ENCODE measurements at regions of chr4 and their contacts with region 1.

Region 1: GRCh38 chr4:145808021-145808650 is 128.2 kb downstream of the C4orf51 start:
- DNase-seq: peak; percentile 77 to 96
- H3K4me3 ChIP-seq: peak overlapping the region; percentile 35; the same call in 1 of the 2 replicates
- H3K27ac ChIP-seq: peak overlapping the region; percentile 99
- H3K4me1 ChIP-seq: peaks cover 26% of the 10 kb centered on the region
- H3K27me3 ChIP-seq: no peaks in the 10 kb centered on the region
- CTCF ChIP-seq: no peak

Region 2: DNA sequence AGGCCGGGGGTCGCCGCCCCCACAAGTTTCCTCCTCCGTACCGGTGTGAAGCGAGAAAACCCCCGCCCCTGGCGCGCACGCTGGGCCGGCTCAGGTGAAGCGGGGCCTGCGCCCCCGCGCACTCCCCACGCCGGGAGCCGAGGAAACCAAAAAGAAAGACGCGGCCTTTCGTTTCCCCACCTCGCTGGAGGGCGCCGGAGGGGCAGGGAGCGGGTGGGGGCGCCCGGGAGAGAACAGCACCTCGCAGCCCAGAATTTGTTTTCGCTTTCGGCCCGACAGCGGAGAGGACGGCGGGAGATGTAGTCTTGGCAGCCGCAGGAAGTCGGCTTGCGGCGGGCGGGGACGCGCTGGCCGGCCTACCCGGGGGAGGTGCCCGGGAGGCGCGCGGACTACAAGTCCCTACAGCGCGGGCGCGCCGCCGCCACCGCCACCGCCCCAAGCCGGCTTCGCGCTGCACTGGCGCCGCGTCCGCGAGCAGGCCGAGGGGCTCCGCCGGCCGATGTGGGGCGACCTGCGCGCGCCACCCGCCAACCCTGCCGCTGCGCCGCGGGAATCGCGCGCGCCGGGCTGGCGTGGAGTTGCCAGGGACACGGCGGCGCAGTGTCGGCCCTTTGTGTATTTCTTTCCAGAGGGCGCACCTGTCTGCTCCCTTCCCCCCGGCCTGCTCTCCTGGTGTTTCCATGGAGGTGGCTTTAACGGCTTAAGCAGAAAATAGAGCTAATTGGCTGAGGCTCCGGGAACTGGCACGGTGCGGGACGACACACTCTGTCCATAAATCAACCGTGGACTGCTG is 627.6 kb before region 1 on chr4 and contains the start of gene OTUD4:
- CTCF ChIA-PET with region 1: no interaction called
- POLR2A ChIA-PET with region 1: interaction called, 4 read pairs
- intact Hi-C with region 1: loop called (anchors 10 kb)
- DNase-seq: peak; percentile 71 to 94
- H3K4me3 ChIP-seq: peak within 1 kb of the TSS; percentile 95
- H3K27ac ChIP-seq: peak within 1 kb of the TSS; percentile 79
- H3K4me1 ChIP-seq: peaks cover 14% of the 10 kb centered on the region
- H3K27me3 ChIP-seq: no peaks in the 10 kb centered on the region
- CTCF ChIP-seq: no peak
- total RNA-seq, gene OTUD4: 43.5 and 44.2 TPM in 2 replicates

Region 3: GRCh38 chr4:145679520-145679919 is 128.6 kb before region 1 on chr4:
- CTCF ChIA-PET with region 1: no interaction called
- POLR2A ChIA-PET with region 1: no interaction called
- intact Hi-C with region 1: loop called (anchors 2 kb)
- DNase-seq: peak; percentile 51 to 77
- H3K4me3 ChIP-seq: no peak overlapping the region
- H3K27ac ChIP-seq: peak overlapping the region; percentile 60
- H3K4me1 ChIP-seq: peaks cover 20% of the 10 kb centered on the region
- H3K27me3 ChIP-seq: no peaks in the 10 kb centered on the region
- CTCF ChIP-seq: no peak

Region 4: DNA sequence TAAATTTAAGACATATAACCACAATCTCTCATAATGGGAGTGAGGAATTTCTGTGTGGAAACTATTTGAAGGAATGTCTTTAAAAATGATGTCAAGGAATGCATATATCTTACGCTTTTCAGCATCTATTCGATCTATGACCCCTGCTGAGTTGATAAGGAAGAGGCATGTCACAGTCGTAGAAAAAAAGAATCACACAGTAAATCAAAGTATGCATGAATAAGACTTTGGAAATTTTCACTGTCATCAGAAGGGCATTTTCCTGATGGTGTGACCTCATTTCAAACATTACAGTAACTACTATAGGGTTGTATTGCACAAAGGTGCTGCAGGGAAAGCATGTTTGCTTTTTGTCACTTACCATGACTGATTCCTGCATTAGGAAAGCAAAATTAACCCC is 447.7 kb after region 1 on chr4:
- CTCF ChIA-PET with region 1: no interaction called
- POLR2A ChIA-PET with region 1: no interaction called
- intact Hi-C with region 1: loop called (anchors 1 kb)
- DNase-seq: peak in 1 of 2 experiments; percentile 73
- H3K4me3 ChIP-seq: no peak overlapping the region
- H3K27ac ChIP-seq: no peak overlapping the region
- H3K4me1 ChIP-seq: peaks cover 23% of the 10 kb centered on the region
- H3K27me3 ChIP-seq: no peaks in the 10 kb centered on the region
- CTCF ChIP-seq: no peak

Measured in PC-9 (cell line).